ENCODE measurements at regions of chr17 and their contacts with region 1.

Region 1: GRCh38 chr17:2204393-2204792 is 99.2 kb downstream of the SMG6 start:
- DNase-seq: no peak
- ATAC-seq: no peak
- H3K4me3 ChIP-seq: no peak overlapping the region
- H3K4me3 Mint-ChIP-seq: no peak overlapping the region
- H3K27ac ChIP-seq: no peak overlapping the region
- H3K27ac Mint-ChIP-seq: no peak overlapping the region
- H3K4me1 ChIP-seq: peaks cover 3 to 7% of the 10 kb centered on the region in 2 experiments
- H3K4me1 Mint-ChIP-seq: peaks cover 21 to 36% (median 32%) of the 10 kb centered on the region in 3 donors
- H3K27me3 ChIP-seq: no peaks in the 10 kb centered on the region
- H3K27me3 Mint-ChIP-seq: no peaks in the 10 kb centered on the region

Region 2: GRCh38 chr17:2172999-2173398 is 31.4 kb before region 1 on chr17:
- CTCF ChIA-PET with region 1: no interaction called
- POLR2A ChIA-PET with region 1: interaction called in 1 of 2 experiments, 13 read pairs
- DNase-seq: no peak
- ATAC-seq: no peak
- H3K4me3 ChIP-seq: no peak overlapping the region
- H3K4me3 Mint-ChIP-seq: no peak overlapping the region
- H3K27ac ChIP-seq: no peak overlapping the region
- H3K27ac Mint-ChIP-seq: peak overlapping the region in 1 of 2 donors; percentile 17
- H3K4me1 ChIP-seq: no peaks in the 10 kb centered on the region
- H3K4me1 Mint-ChIP-seq: peaks cover 2 to 9% (median 5%) of the 10 kb centered on the region in 3 donors
- H3K27me3 ChIP-seq: no peaks in the 10 kb centered on the region
- H3K27me3 Mint-ChIP-seq: no peaks in the 10 kb centered on the region

Region 3: GRCh38 chr17:2183346-2183745 is 21.0 kb before region 1 on chr17:
- CTCF ChIA-PET with region 1: no interaction called
- POLR2A ChIA-PET with region 1: no interaction called
- DNase-seq: no peak
- ATAC-seq: no peak
- H3K4me3 ChIP-seq: no peak overlapping the region
- H3K4me3 Mint-ChIP-seq: no peak overlapping the region
- H3K27ac ChIP-seq: no peak overlapping the region
- H3K27ac Mint-ChIP-seq: no peak overlapping the region
- H3K4me1 ChIP-seq: no peaks in the 10 kb centered on the region
- H3K4me1 Mint-ChIP-seq: peaks cover 0 to 26% (median 14%) of the 10 kb centered on the region in 3 donors
- H3K27me3 ChIP-seq: no peaks in the 10 kb centered on the region
- H3K27me3 Mint-ChIP-seq: no peaks in the 10 kb centered on the region

Region 4: DNA sequence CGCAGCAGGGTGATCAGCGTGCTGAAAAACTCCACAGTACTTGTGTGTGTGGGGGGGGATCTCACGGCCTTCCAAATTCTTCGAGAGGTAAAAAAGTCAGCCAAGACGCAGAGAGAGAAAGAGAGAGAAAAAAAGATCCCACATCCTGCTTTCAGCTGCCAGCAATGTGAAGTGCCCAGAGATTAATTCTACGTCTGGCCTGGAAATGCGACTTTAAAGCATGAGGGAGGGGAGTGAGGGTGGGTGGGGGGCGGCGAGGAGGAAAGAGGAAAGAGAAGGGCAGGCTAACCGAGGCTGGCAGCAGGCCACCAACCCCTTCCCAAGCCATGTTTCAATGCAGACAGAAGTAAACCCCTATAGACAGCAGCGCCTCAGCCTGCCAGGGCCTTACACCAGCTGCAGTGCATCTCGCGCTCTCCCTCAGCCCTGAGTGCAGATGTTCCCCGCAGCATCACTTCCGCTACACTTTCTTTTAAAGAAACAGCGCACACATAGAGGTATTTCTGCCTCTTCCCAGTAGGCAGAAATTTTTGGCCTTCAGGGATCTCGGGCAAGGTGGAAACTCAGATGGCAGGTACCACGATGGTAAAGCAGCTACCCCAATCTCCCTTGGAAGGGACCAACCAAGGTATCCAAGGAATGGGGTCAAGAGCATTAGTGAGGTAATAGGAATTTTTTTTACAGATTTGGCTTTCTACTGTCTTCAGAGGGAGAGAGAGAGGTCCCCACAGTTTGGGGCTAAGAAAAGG is 11.4 kb after region 1 on chr17:
- CTCF ChIA-PET with region 1: no interaction called
- POLR2A ChIA-PET with region 1: no interaction called
- DNase-seq: peak; percentile 48 to 85 (median 68)
- ATAC-seq: peak; percentile 97 to 98 (median 98)
- H3K4me3 ChIP-seq: peak overlapping the region; percentile 33 to 36
- H3K4me3 Mint-ChIP-seq: peak overlapping the region; percentile 50 to 72 (median 68)
- H3K27ac ChIP-seq: peak overlapping the region; percentile 96
- H3K27ac Mint-ChIP-seq: peak overlapping the region; percentile 93 to 97
- H3K4me1 ChIP-seq: peaks cover 33 to 46% of the 10 kb centered on the region in 2 experiments
- H3K4me1 Mint-ChIP-seq: peaks cover 53 to 61% (median 60%) of the 10 kb centered on the region in 3 donors
- H3K27me3 ChIP-seq: no peaks in the 10 kb centered on the region
- H3K27me3 Mint-ChIP-seq: no peaks in the 10 kb centered on the region

Measured in T-cell (primary cell).